CD8-positive, alpha-beta T cell (primary cell): ENCODE measurements at regions of chr2 and their contacts with region 1.

Region 1: DNA sequence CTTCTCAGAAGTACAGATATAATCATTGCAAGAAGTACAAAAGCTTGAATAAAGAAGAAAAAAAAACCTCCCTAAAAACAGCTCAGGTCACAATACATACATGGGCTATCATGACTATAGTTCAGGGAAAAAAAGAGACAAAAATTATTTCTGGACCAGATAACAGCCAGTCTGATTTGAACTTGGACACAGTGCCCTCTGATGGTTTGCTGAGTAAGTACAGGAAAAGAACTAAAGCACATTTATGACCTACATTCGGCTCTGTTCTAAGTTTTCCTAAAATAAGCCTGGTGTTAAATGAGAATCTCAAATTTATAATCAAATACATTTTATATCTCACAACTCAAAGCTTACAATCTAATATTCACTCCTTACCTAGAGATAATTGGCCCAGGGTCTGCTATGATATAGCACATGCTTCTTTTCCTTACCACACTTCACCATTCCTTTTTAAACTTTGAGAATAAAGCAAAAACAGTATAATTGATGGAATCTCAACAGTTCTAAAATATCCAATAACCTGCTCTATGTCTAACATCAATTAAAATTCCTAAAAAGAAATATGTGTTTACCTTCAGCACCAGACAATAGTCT is 81.1 kb downstream of the RAPH1 start:
- DNase-seq: peak in 3 of 9 experiments; percentile 16 to 65 (median 57)
- ATAC-seq: peak; percentile 51
- H3K4me3 ChIP-seq: no peak overlapping the region
- H3K4me3 Mint-ChIP-seq: no peak overlapping the region
- H3K27ac ChIP-seq: no peak overlapping the region
- H3K27ac Mint-ChIP-seq: no peak overlapping the region
- H3K4me1 ChIP-seq: no peaks in the 10 kb centered on the region
- H3K4me1 Mint-ChIP-seq: no peaks in the 10 kb centered on the region
- H3K27me3 ChIP-seq: no peaks in the 10 kb centered on the region
- H3K27me3 Mint-ChIP-seq: no peaks in the 10 kb centered on the region
- CTCF ChIP-seq: peak; percentile 67

Region 2: DNA sequence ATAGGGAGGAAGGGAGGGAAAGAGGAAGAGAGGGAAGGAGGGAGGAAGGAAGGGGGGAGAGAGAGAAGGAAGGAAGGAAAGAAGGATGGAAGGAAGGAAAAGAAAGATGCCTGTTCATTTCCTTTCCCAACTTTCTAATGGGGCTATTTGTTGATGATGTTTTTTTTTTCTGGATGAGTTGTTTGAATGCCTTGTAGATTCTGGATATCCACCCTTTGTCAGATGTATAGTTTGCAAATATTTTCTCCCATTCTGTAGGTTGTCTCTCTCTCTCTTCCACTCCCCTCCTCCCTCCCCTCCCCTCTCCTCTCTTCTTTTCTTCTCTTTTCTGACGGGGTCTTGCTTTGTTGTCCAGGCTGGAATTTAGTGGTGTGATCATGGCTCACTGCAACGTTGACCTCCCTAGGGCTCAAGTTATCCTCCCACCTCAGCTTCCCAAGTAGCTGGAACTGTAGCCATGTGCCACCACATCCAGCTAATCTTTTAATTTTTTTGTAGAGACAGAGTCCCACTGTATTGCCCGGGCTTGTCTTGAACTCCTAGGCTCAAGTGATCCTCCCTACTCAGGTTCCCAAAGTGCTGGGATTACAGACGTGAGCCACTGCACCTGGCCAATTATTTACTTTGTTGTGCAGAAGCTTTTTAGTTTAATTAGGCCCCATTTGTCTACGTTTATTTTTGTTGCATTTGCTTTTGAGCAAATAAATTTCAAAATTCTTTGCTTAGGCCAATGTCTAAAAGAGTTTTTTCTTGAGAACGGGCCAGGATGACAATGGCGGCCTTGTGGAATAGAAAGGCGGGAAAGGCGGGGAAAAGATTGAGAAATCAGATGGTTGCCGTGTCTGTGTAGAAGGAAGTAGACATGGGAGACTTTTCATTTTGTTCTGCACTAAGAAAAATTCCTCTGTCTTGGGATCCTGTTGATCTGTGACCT is 876.4 kb before region 1 on chr2:
- CTCF ChIA-PET with region 1: no interaction called
- POLR2A ChIA-PET with region 1: no interaction called
- intact Hi-C with region 1: loop called (anchors 1 to 2 kb)
- DNase-seq: no peak
- ATAC-seq: no peak
- H3K4me3 ChIP-seq: no peak overlapping the region
- H3K4me3 Mint-ChIP-seq: no peak overlapping the region
- H3K27ac ChIP-seq: no peak overlapping the region
- H3K27ac Mint-ChIP-seq: no peak overlapping the region
- H3K4me1 ChIP-seq: no peaks in the 10 kb centered on the region
- H3K4me1 Mint-ChIP-seq: no peaks in the 10 kb centered on the region
- H3K27me3 ChIP-seq: no peaks in the 10 kb centered on the region
- H3K27me3 Mint-ChIP-seq: no peaks in the 10 kb centered on the region
- CTCF ChIP-seq: no peak

Region 3: DNA sequence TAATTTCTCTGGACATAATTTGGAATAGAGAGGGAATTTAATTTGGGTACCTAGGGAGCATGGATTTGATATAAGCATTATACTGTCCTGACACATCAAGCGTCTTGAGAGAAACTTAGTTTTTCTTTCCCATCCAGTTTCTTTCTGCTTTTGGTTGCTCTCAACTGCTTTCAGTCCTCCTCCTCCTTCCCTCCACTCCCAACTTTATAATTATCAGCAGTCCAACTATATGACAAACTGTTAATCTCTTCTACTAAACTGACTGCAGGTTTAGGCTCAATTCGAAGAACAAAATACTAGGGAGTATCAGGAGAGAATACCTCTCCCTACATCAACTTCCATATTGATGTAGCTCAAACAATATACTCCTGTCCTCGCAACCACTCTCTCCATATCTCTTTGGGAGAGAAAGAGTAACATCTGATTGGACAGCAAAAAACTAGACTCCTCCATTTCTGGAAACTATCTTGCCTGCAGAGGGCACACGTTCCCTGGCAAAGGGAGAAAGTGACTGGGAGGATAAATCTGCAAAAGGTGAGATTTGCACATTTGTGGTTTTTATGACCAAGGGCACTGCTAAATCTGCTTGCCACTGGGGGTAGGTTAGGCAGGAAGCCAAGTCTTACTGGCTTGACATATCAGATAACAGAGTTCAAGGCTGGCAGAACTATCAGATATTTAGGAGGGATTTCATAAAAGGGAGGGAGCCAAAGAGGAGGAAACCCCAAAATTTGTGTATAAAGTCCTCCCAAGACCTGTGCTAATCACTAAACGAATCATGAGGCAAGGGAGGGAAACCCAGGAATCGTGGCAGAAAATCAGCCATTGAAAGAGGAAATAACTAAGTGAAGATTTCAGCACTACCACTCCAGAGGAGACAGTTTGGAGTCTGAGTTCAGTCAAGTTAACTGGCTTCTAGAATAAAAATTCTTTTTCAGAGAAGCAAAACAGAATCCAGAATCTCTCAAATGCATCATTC is 622.4 kb before region 1 on chr2:
- CTCF ChIA-PET with region 1: no interaction called
- POLR2A ChIA-PET with region 1: no interaction called
- intact Hi-C with region 1: loop called (anchors 5 to 10 kb)
- DNase-seq: peak in 8 of 9 experiments; percentile 8 to 76 (median 44)
- ATAC-seq: peak; percentile 71
- H3K4me3 ChIP-seq: no peak overlapping the region
- H3K4me3 Mint-ChIP-seq: peak overlapping the region; percentile 33
- H3K27ac ChIP-seq: no peak overlapping the region
- H3K27ac Mint-ChIP-seq: no peak overlapping the region
- H3K4me1 ChIP-seq: peaks cover 11% of the 10 kb centered on the region
- H3K4me1 Mint-ChIP-seq: peaks cover 13% of the 10 kb centered on the region
- H3K27me3 ChIP-seq: no peaks in the 10 kb centered on the region
- H3K27me3 Mint-ChIP-seq: no peaks in the 10 kb centered on the region
- CTCF ChIP-seq: peak; percentile 49

Region 4: DNA sequence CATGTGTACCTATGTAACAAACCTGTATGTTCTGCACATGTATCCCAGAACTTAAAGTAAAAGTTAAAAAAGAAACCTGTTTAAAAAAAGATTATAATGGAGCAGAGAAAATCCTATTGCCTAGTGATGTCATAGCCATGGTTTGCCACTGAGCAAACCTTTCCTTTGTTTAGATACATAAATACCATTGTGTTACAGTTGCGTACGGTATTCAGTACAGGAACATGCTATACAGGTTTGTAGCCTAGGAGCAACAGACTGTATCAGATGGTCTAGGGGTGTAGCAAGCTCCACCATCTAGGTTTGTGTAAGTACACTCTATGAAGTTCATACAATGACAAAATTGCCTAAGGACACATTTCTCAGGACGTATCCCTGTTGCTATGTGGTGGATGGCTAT is 595.4 kb before region 1 on chr2:
- CTCF ChIA-PET with region 1: no interaction called
- POLR2A ChIA-PET with region 1: no interaction called
- intact Hi-C with region 1: no loop called
- DNase-seq: no peak
- ATAC-seq: no peak
- H3K4me3 ChIP-seq: no peak overlapping the region
- H3K4me3 Mint-ChIP-seq: no peak overlapping the region
- H3K27ac ChIP-seq: no peak overlapping the region
- H3K27ac Mint-ChIP-seq: no peak overlapping the region
- H3K4me1 ChIP-seq: no peaks in the 10 kb centered on the region
- H3K4me1 Mint-ChIP-seq: no peaks in the 10 kb centered on the region
- H3K27me3 ChIP-seq: no peaks in the 10 kb centered on the region
- H3K27me3 Mint-ChIP-seq: no peaks in the 10 kb centered on the region
- CTCF ChIP-seq: no peak

Region 5: GRCh38 chr2:203225423-203226039 is 228.4 kb before region 1 on chr2:
- CTCF ChIA-PET with region 1: interaction called, 13 read pairs
- POLR2A ChIA-PET with region 1: no interaction called
- intact Hi-C with region 1: loop called (anchors 2 kb)
- DNase-seq: peak in 7 of 9 experiments; percentile 13 to 64 (median 33)
- ATAC-seq: peak; percentile 87
- H3K4me3 ChIP-seq: no peak overlapping the region
- H3K4me3 Mint-ChIP-seq: no peak overlapping the region
- H3K27ac ChIP-seq: no peak overlapping the region
- H3K27ac Mint-ChIP-seq: no peak overlapping the region
- H3K4me1 ChIP-seq: no peaks in the 10 kb centered on the region
- H3K4me1 Mint-ChIP-seq: no peaks in the 10 kb centered on the region
- H3K27me3 ChIP-seq: no peaks in the 10 kb centered on the region
- H3K27me3 Mint-ChIP-seq: no peaks in the 10 kb centered on the region
- CTCF ChIP-seq: peak; percentile 71

Region 6: DNA sequence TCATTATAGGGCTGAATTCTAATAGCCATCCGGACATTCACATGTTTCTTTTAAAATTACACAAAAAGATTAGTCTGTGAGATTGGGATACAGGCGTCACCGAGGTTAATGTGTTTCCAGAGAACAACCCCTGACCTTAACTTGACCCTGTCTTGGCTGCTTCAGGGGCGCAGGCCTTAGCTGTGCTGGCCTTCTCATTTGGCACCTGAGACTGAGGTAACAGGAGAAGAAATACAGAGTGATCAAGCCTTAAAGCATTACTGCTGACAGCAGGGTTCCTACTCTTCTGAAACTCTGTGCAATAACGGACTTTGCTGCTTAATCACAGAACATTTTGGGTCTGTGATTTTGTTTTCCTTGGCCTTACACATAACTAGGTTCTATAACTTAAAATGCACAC is 11.5 kb before region 1 on chr2:
- CTCF ChIA-PET with region 1: interaction called, 12 read pairs
- POLR2A ChIA-PET with region 1: no interaction called
- intact Hi-C with region 1: no loop called
- DNase-seq: no peak
- ATAC-seq: no peak
- H3K4me3 ChIP-seq: no peak overlapping the region
- H3K4me3 Mint-ChIP-seq: no peak overlapping the region
- H3K27ac ChIP-seq: no peak overlapping the region
- H3K27ac Mint-ChIP-seq: no peak overlapping the region
- H3K4me1 ChIP-seq: no peaks in the 10 kb centered on the region
- H3K4me1 Mint-ChIP-seq: no peaks in the 10 kb centered on the region
- H3K27me3 ChIP-seq: no peaks in the 10 kb centered on the region
- H3K27me3 Mint-ChIP-seq: no peaks in the 10 kb centered on the region
- CTCF ChIP-seq: no peak

Region 7: DNA sequence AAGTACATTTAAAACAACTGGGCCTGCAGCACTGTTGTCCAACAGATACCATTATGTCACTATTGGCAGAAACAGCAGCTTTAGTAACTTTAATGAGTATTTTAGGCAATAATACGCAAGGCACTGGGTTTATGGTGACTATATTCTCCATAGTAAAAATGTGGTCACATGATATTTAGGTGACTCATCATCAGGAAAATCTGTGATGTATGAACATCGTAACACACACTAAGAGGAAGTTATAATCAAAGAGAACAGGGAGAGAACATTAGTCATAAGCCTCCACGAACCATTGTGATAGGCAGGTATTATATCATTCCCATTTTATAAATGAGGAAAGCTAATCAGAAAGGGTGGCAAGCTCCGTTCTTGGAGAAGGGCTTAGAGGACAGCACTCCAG is 44.2 kb after region 1 on chr2:
- CTCF ChIA-PET with region 1: no interaction called
- POLR2A ChIA-PET with region 1: no interaction called
- intact Hi-C with region 1: no loop called
- DNase-seq: peak in 1 of 9 experiments; percentile 23
- ATAC-seq: no peak
- H3K4me3 ChIP-seq: no peak overlapping the region
- H3K4me3 Mint-ChIP-seq: no peak overlapping the region
- H3K27ac ChIP-seq: no peak overlapping the region
- H3K27ac Mint-ChIP-seq: no peak overlapping the region
- H3K4me1 ChIP-seq: no peaks in the 10 kb centered on the region
- H3K4me1 Mint-ChIP-seq: peaks cover 16% of the 10 kb centered on the region
- H3K27me3 ChIP-seq: no peaks in the 10 kb centered on the region
- H3K27me3 Mint-ChIP-seq: no peaks in the 10 kb centered on the region
- CTCF ChIP-seq: no peak